HEK293 (cell line): ENCODE measurements at regions of chr12 and their contacts with region 1.

Region 1: GRCh38 chr12:108457006-108457733 is 57.9 kb upstream of the FICD start:
- H3K4me3 ChIP-seq: no peak overlapping the region
- H3K27ac ChIP-seq: no peak overlapping the region
- H3K4me1 ChIP-seq: no peaks in the 10 kb centered on the region
- CTCF ChIP-seq: no peak

Region 2: DNA sequence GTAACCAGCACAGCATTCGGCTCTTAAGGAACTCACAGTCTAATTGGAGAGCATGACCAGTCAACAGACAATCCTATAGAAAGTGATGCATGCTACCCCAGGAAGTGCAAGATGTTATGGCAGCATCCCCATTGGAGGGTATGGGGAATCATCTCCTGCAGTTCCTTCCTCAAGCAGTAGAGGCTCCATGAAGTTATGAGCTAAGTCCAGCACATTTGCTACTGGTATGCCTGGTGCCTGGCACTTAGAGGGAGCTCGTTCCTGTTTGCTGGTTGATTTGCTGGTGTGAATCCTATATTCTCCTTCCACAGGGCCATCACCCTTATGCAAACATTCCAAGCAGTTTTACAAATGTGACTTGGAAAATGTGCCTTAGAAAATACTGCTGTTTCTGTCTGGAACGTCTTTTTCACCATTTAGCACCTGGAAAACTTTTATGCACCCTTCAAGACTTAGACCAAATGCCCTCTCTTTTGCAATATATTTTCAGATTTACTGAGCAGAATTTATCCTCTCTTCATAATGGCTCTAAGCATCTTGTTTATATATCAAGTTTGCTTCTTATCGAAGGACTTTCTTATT is 464.2 kb before region 1 on chr12:
- CTCF ChIA-PET with region 1: interaction called, 21 read pairs
- POLR2A ChIA-PET with region 1: no interaction called
- H3K4me3 ChIP-seq: no peak overlapping the region
- H3K27ac ChIP-seq: no peak overlapping the region
- H3K4me1 ChIP-seq: no peaks in the 10 kb centered on the region
- CTCF ChIP-seq: peak; percentile 11; the same call in 1 of the 2 replicates

Region 3: GRCh38 chr12:108473400-108474055 is 16.4 kb after region 1 on chr12:
- CTCF ChIA-PET with region 1: interaction called, 13 read pairs
- POLR2A ChIA-PET with region 1: no interaction called
- H3K4me3 ChIP-seq: no peak overlapping the region
- H3K27ac ChIP-seq: no peak overlapping the region
- H3K4me1 ChIP-seq: no peaks in the 10 kb centered on the region
- CTCF ChIP-seq: no peak